Posterior cingulate gyrus (tissue), 11 donors: ENCODE measurements at regions of chr3 and their contacts with region 1.

Region 1: DNA sequence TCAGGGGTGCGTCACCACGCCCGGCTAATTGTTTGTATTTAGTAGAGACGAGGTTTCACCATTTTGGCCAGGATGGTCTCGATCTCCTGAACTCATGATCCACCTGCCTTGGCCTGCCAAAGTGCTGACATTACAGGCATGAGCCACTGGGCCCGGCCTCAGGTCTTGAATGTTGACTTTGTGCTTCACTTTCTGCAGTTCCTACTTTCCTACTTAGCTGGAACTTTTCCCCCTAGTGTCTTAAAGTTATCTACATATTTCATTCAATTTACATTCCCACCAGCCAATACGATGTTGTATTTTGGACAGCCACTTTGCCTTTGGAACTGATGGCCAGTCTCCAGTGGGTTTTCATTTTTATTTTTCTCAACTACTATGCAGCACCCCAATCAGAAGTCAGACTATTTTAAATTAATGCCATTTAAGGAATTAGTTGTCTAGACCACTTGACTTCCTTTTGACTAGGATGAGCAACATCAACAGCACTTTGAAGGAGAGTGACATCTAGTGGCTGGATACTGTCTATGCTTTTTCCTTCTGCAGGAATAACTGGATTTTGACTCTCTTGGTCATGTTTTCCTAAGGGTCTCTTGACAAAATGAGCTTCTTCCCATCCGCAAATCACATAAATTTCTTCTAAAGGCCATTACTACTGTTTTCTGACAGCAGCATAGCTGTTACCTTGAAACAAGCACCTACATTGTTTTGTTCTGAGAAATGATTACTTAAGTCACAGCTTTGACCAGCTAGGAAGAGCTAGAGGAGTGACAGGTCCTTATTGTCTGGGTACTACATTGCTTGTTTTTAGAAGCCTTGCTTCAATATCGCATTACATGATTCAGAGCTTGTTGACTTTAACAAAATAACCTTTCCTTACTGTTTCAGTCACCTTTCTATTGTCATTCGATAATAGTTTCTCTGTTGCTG is 140.2 kb downstream of the ITPR1 start:
- DNase-seq: peak in 1 of 10 donors; percentile 80

Region 2: GRCh38 chr3:4350789-4351163 is 282.6 kb before region 1 on chr3:
- intact Hi-C with region 1: loop called (anchors 1 kb)
- DNase-seq: peak in 4 of 10 donors; percentile 8 to 82 (median 18)

Region 3: DNA sequence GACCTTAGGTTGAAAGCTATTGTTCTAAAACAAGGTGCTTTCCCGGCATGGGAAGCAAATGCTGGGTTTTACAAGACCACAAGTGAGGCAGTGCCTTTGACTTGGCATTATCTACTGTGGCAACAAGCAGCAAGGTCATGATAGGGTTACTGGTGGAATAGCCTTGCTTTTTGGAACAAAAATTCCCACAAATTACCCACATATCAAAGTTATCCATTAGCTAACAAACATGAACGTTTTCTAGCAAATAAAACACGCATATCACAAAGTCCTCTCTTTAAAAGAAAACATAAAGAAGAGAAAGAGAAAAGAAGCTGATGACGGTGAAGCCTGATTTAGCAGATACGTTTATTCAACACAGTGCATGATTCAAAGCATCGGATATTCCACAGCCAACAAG is 272.5 kb before region 1 on chr3:
- intact Hi-C with region 1: no loop called
- DNase-seq: no peak

Region 4: DNA sequence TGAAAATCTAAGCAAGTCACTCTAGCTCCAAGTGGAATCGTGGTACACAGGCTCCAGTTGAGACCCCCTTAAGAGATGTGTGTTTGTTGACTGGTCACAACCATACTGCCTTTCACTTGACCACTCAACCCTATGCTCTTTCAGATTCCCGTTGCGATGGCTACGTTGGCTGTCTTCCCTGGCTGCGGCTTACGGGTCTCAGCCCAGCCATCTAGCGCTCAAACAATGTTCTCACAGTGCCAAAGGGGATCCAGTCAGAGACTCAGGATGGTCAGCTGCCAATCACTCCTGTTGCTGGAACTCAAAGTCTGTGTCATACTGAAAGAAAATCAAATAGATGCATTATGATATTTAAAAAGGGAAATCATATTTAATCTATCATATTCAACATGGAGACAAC is 97.4 kb after region 1 on chr3:
- intact Hi-C with region 1: no loop called
- DNase-seq: peak in 7 of 10 donors; percentile 37 to 90 (median 54)